B cell (primary cell): ENCODE measurements at regions of chr16 and their contacts with region 1.

Region 1: GRCh38 chr16:23518435-23518891 is 8.2 kb upstream of the GGA2 start:
- DNase-seq: peak; percentile 84
- ATAC-seq: peak; percentile 33
- H3K4me3 ChIP-seq: peak overlapping the region in 2 of 5 experiments; percentile 15 to 47
- H3K4me3 Mint-ChIP-seq: peak overlapping the region; percentile 80
- H3K27ac ChIP-seq: peak overlapping the region; percentile 85 to 92
- H3K27ac Mint-ChIP-seq: peak overlapping the region; percentile 92
- H3K4me1 ChIP-seq: peaks cover 59 to 66% of the 10 kb centered on the region in 2 donors
- H3K4me1 Mint-ChIP-seq: peaks cover 67% of the 10 kb centered on the region
- H3K27me3 ChIP-seq: no peaks in the 10 kb centered on the region
- H3K27me3 Mint-ChIP-seq: no peaks in the 10 kb centered on the region
- CTCF ChIP-seq: no peak

Region 2: GRCh38 chr16:23504451-23505179 is 13.8 kb before region 1 on chr16:
- CTCF ChIA-PET with region 1: interaction called, 22 read pairs
- POLR2A ChIA-PET with region 1: interaction called, 39 read pairs
- intact Hi-C with region 1: loop called (anchors 1 kb)
- DNase-seq: peak; percentile 66
- ATAC-seq: peak; percentile 56
- H3K4me3 ChIP-seq: peak overlapping the region in 4 of 5 experiments; percentile 1 to 91 (median 78)
- H3K4me3 Mint-ChIP-seq: peak overlapping the region; percentile 94
- H3K27ac ChIP-seq: peak overlapping the region; percentile 86 to 91
- H3K27ac Mint-ChIP-seq: peak overlapping the region; percentile 90
- H3K4me1 ChIP-seq: peaks cover 85 to 94% of the 10 kb centered on the region in 2 donors
- H3K4me1 Mint-ChIP-seq: peaks cover 87% of the 10 kb centered on the region
- H3K27me3 ChIP-seq: no peaks in the 10 kb centered on the region
- H3K27me3 Mint-ChIP-seq: no peaks in the 10 kb centered on the region
- CTCF ChIP-seq: no peak